ENCODE measurements at regions of chr1 and their contacts with region 1.

Region 1: GRCh38 chr1:204791453-204792353 is 79.0 kb upstream of the NFASC start:
- DNase-seq: peak; percentile 88
- ATAC-seq: peak; percentile 98
- H3K4me3 Mint-ChIP-seq: no peak overlapping the region
- H3K27ac Mint-ChIP-seq: no peak overlapping the region
- H3K4me1 Mint-ChIP-seq: peaks cover 2% of the 10 kb centered on the region
- H3K27me3 Mint-ChIP-seq: peaks cover 26% of the 10 kb centered on the region

Region 2: DNA sequence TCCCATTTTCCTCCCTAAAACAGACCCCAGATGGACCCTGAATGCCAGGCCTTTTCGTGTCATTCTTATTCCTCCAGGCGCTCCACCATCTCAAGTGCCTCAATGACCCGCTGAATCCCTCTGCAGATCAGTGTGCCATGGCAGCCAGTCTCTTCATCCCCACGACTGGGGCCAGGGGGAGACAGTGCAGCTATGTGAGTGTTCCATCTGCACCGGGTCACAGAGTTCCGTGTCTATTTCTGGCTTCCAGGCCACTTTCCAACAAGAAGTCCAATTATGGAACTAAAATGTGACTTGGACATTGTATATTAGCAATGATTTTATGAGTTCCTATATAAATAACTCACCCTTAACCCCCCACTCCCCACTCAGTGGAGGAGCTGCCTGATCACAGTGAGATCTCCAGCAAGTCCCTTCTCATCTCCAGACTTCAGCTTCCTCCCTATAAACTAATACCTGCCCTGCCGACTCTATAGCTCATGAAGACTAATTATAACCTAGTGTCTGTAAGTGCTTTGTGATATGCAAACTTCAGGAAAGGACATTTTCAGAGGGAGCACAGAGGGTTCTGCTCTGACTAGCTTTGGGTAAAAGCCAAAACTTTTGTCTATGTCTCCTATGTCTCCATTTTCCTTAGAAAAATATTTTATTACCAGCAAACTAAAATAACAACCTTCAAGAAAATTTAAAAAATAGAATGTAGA is 22.6 kb after region 1 on chr1:
- CTCF ChIA-PET with region 1: interaction called, 218 read pairs
- POLR2A ChIA-PET with region 1: no interaction called
- DNase-seq: no peak
- ATAC-seq: no peak
- H3K4me3 Mint-ChIP-seq: no peak overlapping the region
- H3K27ac Mint-ChIP-seq: no peak overlapping the region
- H3K4me1 Mint-ChIP-seq: no peaks in the 10 kb centered on the region
- H3K27me3 Mint-ChIP-seq: peaks cover 23% of the 10 kb centered on the region

Region 3: DNA sequence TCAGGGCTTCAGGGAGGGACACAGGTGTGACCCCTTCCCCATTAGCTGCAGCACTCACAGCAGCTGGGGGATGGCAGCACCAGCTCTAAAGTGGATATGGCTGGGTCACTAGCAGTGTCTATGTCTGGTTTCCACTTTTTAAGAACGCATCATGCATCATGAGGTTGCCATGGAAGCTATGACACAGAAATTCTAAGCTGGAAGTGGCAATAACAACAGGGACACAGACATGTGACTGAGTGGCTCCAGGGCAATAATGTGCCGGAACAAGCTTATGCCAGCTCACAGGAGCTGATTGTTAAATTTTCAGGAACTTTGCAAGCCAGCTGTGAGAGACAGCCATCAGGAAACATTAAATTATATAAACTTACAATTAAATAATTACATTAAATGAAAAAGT is 27.8 kb after region 1 on chr1:
- CTCF ChIA-PET with region 1: interaction called, 10 read pairs
- POLR2A ChIA-PET with region 1: no interaction called
- DNase-seq: no peak
- ATAC-seq: no peak
- H3K4me3 Mint-ChIP-seq: no peak overlapping the region
- H3K27ac Mint-ChIP-seq: no peak overlapping the region
- H3K4me1 Mint-ChIP-seq: no peaks in the 10 kb centered on the region
- H3K27me3 Mint-ChIP-seq: peaks cover 17% of the 10 kb centered on the region

Region 4: GRCh38 chr1:205111354-205111753 is 319.7 kb after region 1 on chr1:
- CTCF ChIA-PET with region 1: no interaction called
- POLR2A ChIA-PET with region 1: no interaction called
- DNase-seq: no peak
- ATAC-seq: no peak
- H3K4me3 Mint-ChIP-seq: no peak overlapping the region
- H3K27ac Mint-ChIP-seq: no peak overlapping the region
- H3K4me1 Mint-ChIP-seq: no peaks in the 10 kb centered on the region
- H3K27me3 Mint-ChIP-seq: no peaks in the 10 kb centered on the region